ENCODE measurements at regions of chr1 and their contacts with region 1.

Region 1: GRCh38 chr1:226424228-226425003 is 16.5 kb upstream of the PARP1 start:
- DNase-seq: peak; percentile 71
- H3K4me3 Mint-ChIP-seq: no peak overlapping the region
- H3K27ac Mint-ChIP-seq: no peak overlapping the region
- H3K4me1 Mint-ChIP-seq: peaks cover 12% of the 10 kb centered on the region
- H3K27me3 Mint-ChIP-seq: peaks cover 15% of the 10 kb centered on the region

Region 2: DNA sequence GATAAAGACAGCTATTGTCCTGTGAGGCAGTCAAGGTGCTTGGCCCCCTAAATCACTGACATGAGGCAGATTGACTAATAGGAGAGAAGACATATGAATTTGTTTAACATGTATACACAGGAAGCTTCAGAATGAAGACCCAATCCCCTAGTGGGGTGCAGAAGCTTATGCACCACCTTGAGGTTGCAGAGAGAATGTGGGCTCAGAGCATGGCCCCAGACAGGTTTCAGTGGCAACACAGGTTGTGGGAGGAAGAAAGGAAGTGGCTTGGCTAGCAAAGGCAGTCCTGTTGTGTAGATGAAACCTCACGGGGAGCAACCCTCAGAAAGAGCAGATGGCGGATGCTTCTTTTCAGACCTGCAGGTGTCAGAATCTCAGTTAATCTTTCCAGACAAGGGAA is 20.5 kb after region 1 on chr1:
- intact Hi-C with region 1: loop called (anchors 2 kb)
- DNase-seq: peak; percentile 93
- H3K4me3 Mint-ChIP-seq: peak overlapping the region; percentile 19
- H3K27ac Mint-ChIP-seq: peak overlapping the region; percentile 15
- H3K4me1 Mint-ChIP-seq: peaks cover 25% of the 10 kb centered on the region
- H3K27me3 Mint-ChIP-seq: peaks cover 32% of the 10 kb centered on the region

Region 3: DNA sequence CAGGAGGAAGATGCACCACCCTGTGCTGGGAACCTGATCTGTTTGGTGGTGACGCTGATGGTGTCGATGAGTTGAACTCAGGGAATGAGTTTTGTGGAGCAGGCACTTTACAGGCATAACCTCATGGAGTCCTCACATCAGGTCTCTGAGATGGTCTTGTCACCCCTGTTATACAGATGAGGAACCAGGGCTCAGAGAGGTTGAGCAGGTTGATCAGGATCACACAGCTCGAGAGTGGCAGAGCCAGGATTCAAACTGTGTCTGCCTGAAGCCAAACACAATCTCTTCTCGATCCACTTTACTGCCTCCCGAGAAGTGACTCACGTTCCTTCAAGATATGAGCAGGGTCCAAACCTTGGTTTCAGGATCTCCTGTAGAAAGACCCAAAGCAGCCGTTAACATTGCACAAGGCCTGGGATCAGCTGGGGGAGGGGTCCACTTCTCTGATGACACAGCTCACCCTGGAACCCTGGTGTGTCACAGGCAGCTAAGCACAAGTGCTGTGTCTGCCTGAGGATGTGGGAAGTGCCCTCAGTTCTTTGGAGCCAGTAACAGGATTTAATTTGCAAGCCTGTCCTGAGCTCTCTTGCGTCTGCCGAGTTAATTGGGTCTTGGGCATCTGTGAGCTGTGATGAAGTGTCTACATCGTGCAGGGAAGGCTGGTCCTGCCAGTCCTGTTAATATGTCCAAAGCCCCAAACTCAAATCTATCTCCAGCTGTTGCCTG is 58.7 kb after region 1 on chr1:
- intact Hi-C with region 1: no loop called
- DNase-seq: no peak
- H3K4me3 Mint-ChIP-seq: no peak overlapping the region
- H3K27ac Mint-ChIP-seq: no peak overlapping the region
- H3K4me1 Mint-ChIP-seq: no peaks in the 10 kb centered on the region
- H3K27me3 Mint-ChIP-seq: peaks cover 34% of the 10 kb centered on the region

Region 4: DNA sequence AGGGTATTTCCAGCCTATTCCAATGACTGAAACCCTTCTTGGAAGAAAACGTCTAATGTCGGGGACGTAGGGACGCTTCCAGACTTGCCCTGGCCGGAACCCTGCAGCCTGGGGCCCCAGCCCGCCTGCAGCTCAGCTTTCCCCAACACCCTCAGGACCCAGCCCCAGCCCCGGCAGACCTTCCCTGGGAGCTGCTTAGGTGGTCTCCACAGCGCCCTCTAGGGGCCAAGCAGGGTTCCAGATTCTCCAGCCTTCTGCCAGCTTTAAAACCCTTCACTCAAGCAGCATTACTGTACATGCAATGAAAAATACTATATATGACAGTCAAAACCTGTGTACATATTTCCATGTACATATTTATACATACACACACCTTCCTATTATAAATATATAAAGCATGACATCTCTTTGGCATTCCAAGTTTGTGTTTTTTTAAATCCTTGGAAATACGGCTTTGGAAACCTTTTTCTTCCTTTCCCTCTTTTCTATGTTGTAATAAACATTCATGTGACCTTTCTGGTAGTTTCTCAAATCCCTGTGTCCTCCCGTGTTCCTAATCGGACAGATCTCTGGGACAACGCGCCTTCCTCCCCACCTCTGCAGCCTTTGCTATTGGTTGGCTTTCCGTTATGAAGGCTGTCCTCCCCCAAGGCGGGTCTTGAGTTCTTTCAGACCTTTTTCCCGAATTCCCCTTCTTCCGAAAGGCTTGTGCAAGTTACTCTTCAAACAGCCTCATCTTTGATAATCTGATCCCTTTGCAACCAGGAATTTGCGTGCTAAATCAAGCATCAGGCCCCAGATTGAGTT is 184.5 kb after region 1 on chr1:
- intact Hi-C with region 1: loop called (anchors 2 kb)
- DNase-seq: peak; percentile 87
- H3K4me3 Mint-ChIP-seq: no peak overlapping the region
- H3K27ac Mint-ChIP-seq: no peak overlapping the region
- H3K4me1 Mint-ChIP-seq: no peaks in the 10 kb centered on the region
- H3K27me3 Mint-ChIP-seq: peaks cover 12% of the 10 kb centered on the region